K562 (cell line): ENCODE measurements at regions of chr5 and their contacts with region 1.

Region 1: GRCh38 chr5:126732716-126733115 is 44.2 kb upstream of the LMNB1 start:
- DNase-seq: peak in 1 of 4 experiments; percentile 36
- ATAC-seq: peak; percentile 65
- H3K4me3 ChIP-seq: no peak overlapping the region
- H3K27ac ChIP-seq: no peak overlapping the region
- H3K4me1 ChIP-seq: peaks cover 0 to 4% of the 10 kb centered on the region in 2 experiments; a peak in 3 of 5 replicates
- H3K27me3 ChIP-seq: no peaks in the 10 kb centered on the region
- CTCF ChIP-seq: no peak
- EP300 ChIP-seq: no peak
- POLR2A ChIP-seq: no peak
- RAD21 ChIP-seq: no peak

Region 2: DNA sequence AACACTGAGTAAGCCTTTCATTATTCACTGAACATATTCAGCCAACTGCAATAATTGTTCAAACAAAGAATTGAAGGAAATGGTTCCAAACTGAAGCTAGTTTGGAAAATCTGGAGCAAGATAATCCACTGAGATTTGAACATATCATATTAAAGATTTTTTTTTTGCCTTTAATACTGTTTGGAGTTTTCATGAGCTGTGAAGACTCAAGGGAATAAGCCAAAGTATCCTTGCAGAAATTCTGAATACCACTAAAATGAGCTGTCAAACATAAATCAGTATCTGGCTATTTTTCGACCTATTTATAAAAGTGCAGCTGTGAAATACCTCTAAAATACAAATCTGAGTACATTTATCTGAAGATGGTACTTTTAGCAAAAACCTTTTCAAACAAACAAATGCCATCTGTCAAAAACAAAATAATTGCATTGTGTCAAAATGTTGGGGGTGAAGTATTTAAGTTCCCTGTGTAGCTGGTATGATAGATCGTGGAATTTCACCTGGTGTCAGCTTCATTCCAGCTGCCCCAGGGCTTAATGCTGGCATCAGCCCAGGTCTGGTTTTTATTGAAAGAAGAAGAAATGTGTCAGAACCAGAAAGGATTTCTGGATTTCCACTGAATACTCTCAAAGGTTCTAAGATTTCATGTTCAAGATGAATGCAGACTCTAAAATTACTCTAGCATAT is 458.5 kb before region 1 on chr5:
- CTCF ChIA-PET with region 1: no interaction called
- POLR2A ChIA-PET with region 1: no interaction called
- in situ Hi-C with region 1: no loop called
- intact Hi-C with region 1: no loop called
- DNase-seq: no peak
- ATAC-seq: no peak
- H3K4me3 ChIP-seq: no peak overlapping the region
- H3K27ac ChIP-seq: no peak overlapping the region
- H3K4me1 ChIP-seq: no peaks in the 10 kb centered on the region
- H3K27me3 ChIP-seq: no peaks in the 10 kb centered on the region
- CTCF ChIP-seq: no peak
- EP300 ChIP-seq: no peak
- POLR2A ChIP-seq: no peak
- RAD21 ChIP-seq: no peak

Region 3: DNA sequence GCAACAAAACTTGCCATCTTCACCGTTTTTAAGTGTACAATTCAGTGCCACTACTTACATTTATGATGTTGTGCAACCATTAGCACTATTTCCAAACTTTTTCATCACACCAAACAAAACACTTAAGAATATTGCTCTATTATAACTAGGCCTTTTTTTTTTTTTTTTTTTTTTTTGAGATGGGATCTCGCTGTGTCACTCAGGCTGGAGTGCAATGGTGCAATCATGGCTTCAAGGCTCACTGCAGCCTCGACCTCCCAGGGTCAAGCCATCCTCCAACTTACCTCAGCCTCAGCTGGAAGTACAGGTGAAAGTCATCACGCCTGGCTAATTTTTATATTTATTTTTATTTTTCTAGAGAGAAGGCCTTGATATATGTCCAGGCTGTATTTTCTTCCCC is 21.9 kb after region 1 on chr5:
- CTCF ChIA-PET with region 1: interaction called, 10 read pairs
- POLR2A ChIA-PET with region 1: interaction called, 4 read pairs
- in situ Hi-C with region 1: no loop called
- intact Hi-C with region 1: no loop called
- DNase-seq: peak in 1 of 4 experiments; percentile 43
- ATAC-seq: peak; percentile 57
- H3K4me3 ChIP-seq: no peak overlapping the region
- H3K27ac ChIP-seq: no peak overlapping the region
- H3K4me1 ChIP-seq: peaks cover 21 to 44% of the 10 kb centered on the region in 2 experiments
- H3K27me3 ChIP-seq: no peaks in the 10 kb centered on the region
- CTCF ChIP-seq: no peak
- EP300 ChIP-seq: no peak; the same call in 1 of the 2 replicates
- POLR2A ChIP-seq: no peak
- RAD21 ChIP-seq: no peak